Right lobe of liver (tissue), 6 donors: ENCODE measurements at regions of chr18 and their contacts with region 1.

Region 1: GRCh38 chr18:24118750-24119577 is 19.9 kb upstream of the CABYR start:
- DNase-seq: peak in 2 of 3 donors; percentile 56 to 69
- ATAC-seq: peak; percentile 55 to 64 (median 57)
- H3K4me3 ChIP-seq: no peak overlapping the region
- H3K27ac ChIP-seq: peak overlapping the region in 2 of 3 donors; percentile 11 to 97
- H3K4me1 ChIP-seq: peaks cover 0 to 33% (median 9%) of the 10 kb centered on the region in 4 donors
- H3K27me3 ChIP-seq: no peaks in the 10 kb centered on the region
- CTCF ChIP-seq: peak; percentile 92 to 98 (median 94)
- POLR2A ChIP-seq: no peak

Region 2: GRCh38 chr18:23779696-23780303 is 339.2 kb before region 1 on chr18:
- intact Hi-C with region 1: no loop called
- DNase-seq: no peak
- ATAC-seq: no peak
- H3K4me3 ChIP-seq: no peak overlapping the region
- H3K27ac ChIP-seq: no peak overlapping the region
- H3K4me1 ChIP-seq: no peaks in the 10 kb centered on the region
- H3K27me3 ChIP-seq: no peaks in the 10 kb centered on the region
- CTCF ChIP-seq: no peak
- POLR2A ChIP-seq: no peak

Region 3: GRCh38 chr18:23884681-23885375 is 234.1 kb before region 1 on chr18:
- intact Hi-C with region 1: no loop called
- DNase-seq: no peak
- ATAC-seq: peak in 3 of 4 donors; percentile 12 to 52 (median 31)
- H3K4me3 ChIP-seq: no peak overlapping the region
- H3K27ac ChIP-seq: no peak overlapping the region
- H3K4me1 ChIP-seq: peaks cover 0 to 6% (median 1%) of the 10 kb centered on the region in 4 donors
- H3K27me3 ChIP-seq: no peaks in the 10 kb centered on the region
- CTCF ChIP-seq: no peak
- POLR2A ChIP-seq: no peak

Region 4: GRCh38 chr18:24051031-24051947 is 67.7 kb before region 1 on chr18:
- intact Hi-C with region 1: loop called in 1 of 2 experiments (anchors 10 kb)
- DNase-seq: peak in 1 of 3 donors; percentile 39
- ATAC-seq: peak; percentile 47 to 70 (median 60)
- H3K4me3 ChIP-seq: no peak overlapping the region
- H3K27ac ChIP-seq: peak overlapping the region; percentile 63 to 95 (median 94)
- H3K4me1 ChIP-seq: peaks cover 0 to 35% (median 9%) of the 10 kb centered on the region in 4 donors
- H3K27me3 ChIP-seq: no peaks in the 10 kb centered on the region
- CTCF ChIP-seq: no peak
- POLR2A ChIP-seq: no peak

Region 5: DNA sequence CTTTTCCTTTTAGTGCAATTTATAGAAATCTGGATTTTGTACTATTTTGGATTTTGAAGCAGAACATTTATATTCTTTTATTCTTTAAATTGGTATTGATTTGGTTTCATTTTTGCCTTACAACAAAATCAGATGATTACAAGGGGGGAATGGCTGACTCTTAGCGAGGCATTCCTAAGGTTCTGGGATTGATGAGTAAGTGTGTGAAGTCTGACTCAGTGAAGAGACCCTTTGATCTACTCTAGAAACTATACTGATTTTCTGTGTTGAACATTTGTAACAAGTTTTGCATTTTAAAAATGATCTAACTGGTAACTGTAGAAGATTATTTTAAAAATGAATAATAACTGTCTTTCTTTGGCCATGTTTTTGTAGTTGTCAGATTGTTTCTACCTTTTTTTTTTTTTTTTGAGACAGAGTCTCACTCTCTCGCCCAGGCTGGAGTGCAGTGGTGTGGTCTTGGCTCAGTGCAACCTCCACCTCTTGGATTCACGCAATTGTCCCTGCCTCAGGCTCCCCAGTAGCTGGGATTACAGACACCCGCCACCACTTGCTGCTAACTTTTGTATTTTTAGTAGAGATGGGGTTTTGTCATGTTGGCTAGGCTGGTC is 55.7 kb before region 1 on chr18:
- intact Hi-C with region 1: loop called (anchors 10 kb)
- DNase-seq: no peak
- ATAC-seq: peak; percentile 32 to 68 (median 52)
- H3K4me3 ChIP-seq: no peak overlapping the region
- H3K27ac ChIP-seq: peak overlapping the region; percentile 70 to 77 (median 71)
- H3K4me1 ChIP-seq: peaks cover 0 to 40% (median 14%) of the 10 kb centered on the region in 4 donors
- H3K27me3 ChIP-seq: no peaks in the 10 kb centered on the region
- CTCF ChIP-seq: no peak
- POLR2A ChIP-seq: no peak